Astrocyte of the cerebellum (primary cell): ENCODE measurements at regions of chr20 and their contacts with region 1.

Region 1: GRCh38 chr20:944774-945410 is 28.8 kb upstream of the ANGPT4 start:
- DNase-seq: no peak
- H3K4me3 ChIP-seq: no peak overlapping the region
- CTCF ChIP-seq: no peak

Region 2: GRCh38 chr20:891058-891705 is 53.7 kb before region 1 on chr20:
- in situ Hi-C with region 1: loop called (anchors 5 kb)
- DNase-seq: peak; percentile 38
- H3K4me3 ChIP-seq: no peak overlapping the region
- CTCF ChIP-seq: no peak